ENCODE measurements at regions of chr1 and their contacts with region 1.

Region 1: GRCh38 chr1:8314346-8315280 is 3.3 kb upstream of the SLC45A1 start:
- DNase-seq: peak; percentile 69
- H3K4me3 Mint-ChIP-seq: no peak overlapping the region
- H3K27ac Mint-ChIP-seq: no peak overlapping the region
- H3K4me1 Mint-ChIP-seq: peaks cover 9% of the 10 kb centered on the region
- H3K27me3 Mint-ChIP-seq: peaks cover 25% of the 10 kb centered on the region

Region 2: DNA sequence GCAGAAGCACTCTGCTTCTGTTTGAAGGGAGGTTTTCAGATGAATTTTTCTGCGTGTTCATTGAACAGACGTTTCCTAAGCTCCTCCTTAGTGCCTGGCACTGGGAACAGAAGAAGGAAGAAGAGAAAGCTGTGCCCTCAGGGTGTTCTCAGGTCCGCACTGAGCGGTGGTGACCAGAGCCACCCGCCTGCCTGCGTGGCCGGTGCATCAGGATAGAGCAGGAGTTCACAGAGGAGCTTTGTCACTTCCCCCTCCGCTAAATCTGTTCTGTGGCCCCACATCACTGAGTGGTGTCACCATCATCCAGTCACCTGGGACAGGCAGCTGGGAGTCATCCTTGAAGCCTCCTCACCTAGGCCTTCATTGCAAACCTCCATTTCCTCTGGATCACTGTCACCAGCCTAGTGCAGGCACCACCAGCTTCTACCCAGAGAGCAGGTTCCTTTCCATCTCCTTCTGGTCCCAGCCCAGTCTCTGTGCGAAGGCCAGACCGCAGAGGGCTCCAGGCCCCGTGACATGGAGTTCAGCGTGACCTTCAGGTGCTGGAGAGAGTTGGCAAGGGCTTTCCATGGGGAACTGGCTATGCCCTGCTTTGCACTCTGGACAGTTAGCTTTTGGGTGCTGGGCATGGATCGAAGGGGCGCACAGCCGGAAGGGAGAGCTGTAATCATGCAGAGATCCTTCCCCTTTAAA is 331.4 kb before region 1 on chr1:
- CTCF ChIA-PET with region 1: interaction called, 30 read pairs
- POLR2A ChIA-PET with region 1: no interaction called
- intact Hi-C with region 1: no loop called
- DNase-seq: no peak
- H3K4me3 Mint-ChIP-seq: no peak overlapping the region
- H3K27ac Mint-ChIP-seq: no peak overlapping the region
- H3K4me1 Mint-ChIP-seq: peaks cover 5% of the 10 kb centered on the region
- H3K27me3 Mint-ChIP-seq: no peaks in the 10 kb centered on the region

Region 3: DNA sequence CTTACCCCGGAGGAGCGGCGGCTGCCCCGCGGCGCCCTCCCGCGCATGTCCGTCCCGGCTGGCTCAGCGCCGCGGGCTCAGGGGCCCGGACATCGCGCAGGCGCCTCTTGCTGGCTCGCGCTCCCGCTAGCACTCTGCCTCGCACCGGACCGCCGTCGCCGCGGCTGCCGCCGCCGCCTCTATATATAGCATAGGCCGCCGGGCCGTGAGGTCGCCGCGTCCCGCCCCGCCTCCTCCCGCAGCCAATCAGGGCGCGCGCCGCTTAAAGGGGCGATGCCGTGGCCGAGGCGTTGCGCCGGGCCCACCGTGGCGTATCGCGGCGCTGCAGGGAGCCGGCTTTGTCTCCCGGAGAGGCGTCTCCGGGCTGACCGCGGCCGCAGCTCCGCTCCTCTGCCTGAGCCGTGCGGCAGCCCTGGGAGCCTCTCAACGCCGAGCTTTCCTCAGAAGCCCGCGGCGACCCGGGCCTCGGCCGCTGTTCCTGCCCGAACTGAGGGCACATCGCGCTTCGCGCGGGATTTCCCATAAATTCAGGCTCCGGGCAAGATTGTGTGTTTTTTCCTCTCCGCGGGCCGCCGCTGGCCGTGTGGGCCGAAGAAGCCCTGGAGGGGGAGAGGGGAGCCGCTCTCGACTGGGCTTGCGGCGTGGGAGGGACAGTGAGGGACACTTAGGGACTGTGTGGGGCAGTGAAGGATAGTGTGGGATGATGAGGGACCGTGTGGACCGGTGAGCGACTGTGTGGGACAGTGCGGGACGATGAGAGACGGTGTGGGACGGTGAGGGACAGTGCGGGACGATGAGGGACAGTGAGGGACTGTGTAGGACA is 288.2 kb before region 1 on chr1 and contains the start of gene ERRFI1:
- CTCF ChIA-PET with region 1: interaction called, 66 read pairs
- POLR2A ChIA-PET with region 1: no interaction called
- intact Hi-C with region 1: loop called (anchors 1 kb)
- DNase-seq: peak; percentile 91
- H3K4me3 Mint-ChIP-seq: peak within 1 kb of the TSS; percentile 78
- H3K27ac Mint-ChIP-seq: no peak within 1 kb of the TSS
- H3K4me1 Mint-ChIP-seq: peaks cover 12% of the 10 kb centered on the region
- H3K27me3 Mint-ChIP-seq: peaks cover 21% of the 10 kb centered on the region
- total RNA-seq, gene ERRFI1: 1.5 to 1.9 TPM

Region 4: GRCh38 chr1:8330271-8331125 is 15.9 kb after region 1 on chr1:
- CTCF ChIA-PET with region 1: no interaction called
- POLR2A ChIA-PET with region 1: no interaction called
- intact Hi-C with region 1: no loop called
- DNase-seq: no peak
- H3K4me3 Mint-ChIP-seq: no peak overlapping the region
- H3K27ac Mint-ChIP-seq: no peak overlapping the region
- H3K4me1 Mint-ChIP-seq: no peaks in the 10 kb centered on the region
- H3K27me3 Mint-ChIP-seq: no peaks in the 10 kb centered on the region

Region 5: GRCh38 chr1:8571200-8571984 is 256.8 kb after region 1 on chr1:
- CTCF ChIA-PET with region 1: no interaction called
- POLR2A ChIA-PET with region 1: no interaction called
- intact Hi-C with region 1: no loop called
- DNase-seq: no peak
- H3K4me3 Mint-ChIP-seq: no peak overlapping the region
- H3K27ac Mint-ChIP-seq: no peak overlapping the region
- H3K4me1 Mint-ChIP-seq: no peaks in the 10 kb centered on the region
- H3K27me3 Mint-ChIP-seq: no peaks in the 10 kb centered on the region